Colonic mucosa (tissue), 4 donors: ENCODE measurements at regions of chr7 and their contacts with region 1.

Region 1: GRCh38 chr7:32347244-32347828 is 142.8 kb downstream of the LSM5 start:
- DNase-seq: peak; percentile 30
- H3K4me3 ChIP-seq: no peak overlapping the region
- H3K27ac ChIP-seq: no peak overlapping the region
- H3K4me1 ChIP-seq: no peaks in the 10 kb centered on the region
- H3K27me3 ChIP-seq: no peaks in the 10 kb centered on the region
- CTCF ChIP-seq: peak; percentile 67

Region 2: GRCh38 chr7:32218154-32218467 is 129.2 kb before region 1 on chr7:
- intact Hi-C with region 1: loop called (anchors 10 kb)
- DNase-seq: no peak
- H3K4me3 ChIP-seq: no peak overlapping the region
- H3K27ac ChIP-seq: no peak overlapping the region
- H3K4me1 ChIP-seq: no peaks in the 10 kb centered on the region
- H3K27me3 ChIP-seq: no peaks in the 10 kb centered on the region
- CTCF ChIP-seq: no peak

Region 3: DNA sequence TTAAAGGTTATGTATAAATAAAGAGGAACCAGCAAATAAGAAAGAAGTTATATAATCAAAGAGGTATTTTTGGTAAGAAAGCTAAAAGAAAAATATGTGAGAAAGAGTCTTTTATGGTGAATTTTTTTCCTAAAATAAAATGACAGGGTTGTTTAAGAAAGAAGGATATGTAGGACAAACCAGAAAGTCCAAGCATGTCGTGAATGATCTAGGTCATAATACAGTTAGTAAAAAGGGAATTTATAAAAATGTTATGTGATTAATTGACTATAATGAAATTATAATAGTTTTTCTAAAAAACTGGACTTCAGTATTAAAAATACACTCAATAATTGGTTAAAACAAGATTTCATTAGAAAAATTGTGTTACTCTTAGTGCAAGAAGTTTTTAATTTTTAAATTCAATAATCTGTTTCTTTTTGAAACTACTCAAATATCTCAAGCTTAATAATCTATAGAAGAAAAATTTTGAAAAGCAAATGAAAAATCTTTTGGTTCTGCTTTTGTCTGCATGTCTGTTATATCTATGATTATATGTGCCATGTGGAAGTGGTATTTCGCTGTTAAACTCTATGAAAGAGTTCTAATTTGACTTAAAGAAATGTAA is 171.3 kb after region 1 on chr7:
- intact Hi-C with region 1: no loop called
- DNase-seq: no peak
- H3K4me3 ChIP-seq: no peak overlapping the region
- H3K27ac ChIP-seq: no peak overlapping the region
- H3K4me1 ChIP-seq: no peaks in the 10 kb centered on the region
- H3K27me3 ChIP-seq: no peaks in the 10 kb centered on the region
- CTCF ChIP-seq: no peak